Activated CD4-positive, alpha-beta T cell treated with anti-CD3 and anti-CD28 coated beads, Interleukin-2, amount 10 ng/mL, durations not matched to agents 24 days and 14 days (primary cell): ENCODE measurements at regions of chr4 and their contacts with region 1.

Region 1: DNA sequence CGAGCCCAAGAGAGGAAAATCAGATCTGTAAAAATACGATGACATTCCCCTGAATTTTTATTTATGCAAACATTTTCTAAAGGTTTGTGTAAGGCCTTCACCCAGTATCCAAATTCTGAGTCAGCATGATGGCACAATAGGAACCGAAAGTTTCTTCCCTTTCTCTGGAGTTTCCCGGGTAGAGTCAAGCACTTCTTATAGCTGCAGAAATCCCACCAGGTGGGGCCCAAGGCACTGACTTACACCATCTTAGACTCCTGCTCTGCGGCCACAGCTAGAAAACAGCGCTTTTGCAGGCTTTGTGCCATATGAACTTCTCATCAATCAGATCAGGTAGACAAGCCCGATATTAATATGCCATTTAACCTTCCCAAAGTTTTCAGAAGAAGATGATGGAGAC is 13.4 kb downstream of the LEF1 start:
- DNase-seq: peak; percentile 78
- H3K4me3 Mint-ChIP-seq: peak overlapping the region; percentile 82
- H3K27ac Mint-ChIP-seq: peak overlapping the region; percentile 88
- H3K4me1 Mint-ChIP-seq: peaks cover 69% of the 10 kb centered on the region
- H3K27me3 Mint-ChIP-seq: no peaks in the 10 kb centered on the region

Region 2: DNA sequence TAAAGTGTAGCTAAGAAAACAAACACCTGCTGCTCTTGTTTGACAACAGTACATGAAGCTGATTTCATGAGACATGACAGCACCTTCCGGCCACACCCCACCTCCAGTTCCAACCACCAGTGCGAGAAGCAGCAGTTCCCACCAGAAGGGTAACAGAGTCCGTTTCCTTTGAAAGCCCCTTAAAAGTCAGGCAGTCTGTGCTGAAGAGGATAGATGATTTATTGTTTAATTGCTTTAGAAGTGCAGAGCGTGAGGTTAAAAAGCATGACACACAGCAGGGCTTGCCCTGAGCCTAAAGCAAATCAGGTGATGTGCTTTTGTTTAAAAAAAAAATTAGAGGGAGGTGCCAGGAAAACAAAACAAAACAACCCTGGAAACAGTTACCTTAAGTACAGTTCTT is 83.1 kb before region 1 on chr4:
- intact Hi-C with region 1: no loop called
- DNase-seq: peak; percentile 90
- H3K4me3 Mint-ChIP-seq: peak overlapping the region; percentile 68
- H3K27ac Mint-ChIP-seq: peak overlapping the region; percentile 71
- H3K4me1 Mint-ChIP-seq: peaks cover 59% of the 10 kb centered on the region
- H3K27me3 Mint-ChIP-seq: no peaks in the 10 kb centered on the region

Region 3: DNA sequence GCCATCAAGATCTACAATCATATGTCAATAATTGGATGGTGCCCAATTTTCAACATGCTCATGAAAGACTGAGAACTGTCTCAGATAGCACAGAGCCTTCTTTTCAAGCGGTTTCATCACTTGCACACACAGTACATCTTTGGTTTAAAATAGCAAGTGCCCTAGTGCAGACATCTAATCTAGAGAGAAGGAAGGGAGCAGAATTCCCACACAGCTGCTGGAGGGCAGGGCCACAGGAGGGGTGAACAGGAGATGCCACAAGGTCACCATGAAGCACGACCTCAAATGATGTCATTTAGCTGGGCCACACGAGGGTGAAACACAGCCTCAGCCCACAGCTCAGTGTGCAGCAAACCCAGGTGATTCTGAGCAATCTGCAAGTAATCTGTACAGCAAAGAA is 10.9 kb before region 1 on chr4:
- intact Hi-C with region 1: loop called (anchors 1 kb)
- DNase-seq: peak; percentile 81
- H3K4me3 Mint-ChIP-seq: peak overlapping the region; percentile 59
- H3K27ac Mint-ChIP-seq: peak overlapping the region; percentile 93
- H3K4me1 Mint-ChIP-seq: peaks cover 85% of the 10 kb centered on the region
- H3K27me3 Mint-ChIP-seq: no peaks in the 10 kb centered on the region

Region 4: GRCh38 chr4:108166441-108167315 is 11.3 kb after region 1 on chr4:
- intact Hi-C with region 1: loop called (anchors 1 kb)
- DNase-seq: peak; percentile 90
- H3K4me3 Mint-ChIP-seq: peak overlapping the region; percentile 97
- H3K27ac Mint-ChIP-seq: peak overlapping the region; percentile 94
- H3K4me1 Mint-ChIP-seq: peaks cover 55% of the 10 kb centered on the region
- H3K27me3 Mint-ChIP-seq: peaks cover 14% of the 10 kb centered on the region

Region 5: GRCh38 chr4:108483079-108483478 is 327.7 kb after region 1 on chr4:
- intact Hi-C with region 1: loop called (anchors 5 kb)
- DNase-seq: peak; percentile 82
- H3K4me3 Mint-ChIP-seq: peak overlapping the region; percentile 82
- H3K27ac Mint-ChIP-seq: peak overlapping the region; percentile 85
- H3K4me1 Mint-ChIP-seq: peaks cover 32% of the 10 kb centered on the region
- H3K27me3 Mint-ChIP-seq: no peaks in the 10 kb centered on the region

Region 6: DNA sequence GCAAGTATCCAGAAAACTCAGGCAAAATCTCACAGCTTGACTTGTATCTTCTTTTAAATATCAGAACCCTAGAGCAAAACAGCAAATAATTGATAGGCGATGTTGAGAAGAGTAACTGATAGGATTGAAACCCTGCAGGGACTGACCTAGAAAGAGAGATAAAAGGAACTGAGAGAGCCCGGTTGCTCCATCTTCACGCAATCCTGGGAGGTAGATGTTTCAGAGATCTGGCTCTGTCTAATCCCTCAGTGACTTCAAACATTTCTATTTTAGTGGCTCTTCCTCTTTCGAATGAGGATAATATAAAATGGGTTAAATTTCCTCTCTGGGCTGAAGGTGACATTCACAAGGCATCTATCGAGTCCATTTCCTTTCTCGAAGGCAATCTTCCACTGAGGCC is 425.7 kb after region 1 on chr4:
- intact Hi-C with region 1: no loop called
- DNase-seq: no peak
- H3K4me3 Mint-ChIP-seq: no peak overlapping the region
- H3K27ac Mint-ChIP-seq: no peak overlapping the region
- H3K4me1 Mint-ChIP-seq: no peaks in the 10 kb centered on the region
- H3K27me3 Mint-ChIP-seq: no peaks in the 10 kb centered on the region